ENCODE measurements at regions of chr2 and their contacts with region 1.

Region 1: GRCh38 chr2:130797493-130798435 is 39.0 kb upstream of the ARHGEF4 start:
- DNase-seq: peak; percentile 84 to 96 (median 90)
- ATAC-seq: peak; percentile 88
- H3K4me3 ChIP-seq: peak overlapping the region; percentile 94
- H3K4me3 Mint-ChIP-seq: peak overlapping the region; percentile 85
- H3K27ac ChIP-seq: peak overlapping the region; percentile 74 to 87
- H3K27ac Mint-ChIP-seq: peak overlapping the region; percentile 71
- H3K4me1 ChIP-seq: peaks cover 17% of the 10 kb centered on the region
- H3K4me1 Mint-ChIP-seq: peaks cover 7% of the 10 kb centered on the region
- H3K27me3 ChIP-seq: peaks cover 0 to 2% of the 10 kb centered on the region in 2 experiments
- H3K27me3 Mint-ChIP-seq: peaks cover 4% of the 10 kb centered on the region
- CTCF ChIP-seq: peak; percentile 68

Region 2: DNA sequence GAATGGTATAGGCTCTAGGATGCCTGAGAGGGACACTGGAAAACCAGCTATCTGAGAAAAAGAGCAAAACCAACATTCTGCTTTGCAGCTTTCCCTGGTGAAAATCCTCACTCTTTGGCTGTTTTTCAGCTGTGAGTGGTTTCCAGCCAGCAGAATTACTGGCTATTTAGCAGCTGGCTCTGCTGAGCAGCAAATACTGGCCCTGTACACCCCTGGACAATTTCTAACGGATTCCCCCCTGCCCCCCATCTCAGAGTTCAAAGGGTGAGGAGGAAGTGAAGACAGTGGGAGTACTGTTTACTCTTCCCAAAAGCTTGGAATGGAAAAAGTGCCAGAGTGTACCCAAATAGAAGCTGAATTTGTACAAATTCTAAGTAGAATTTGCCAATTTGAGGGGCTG is 481.2 kb before region 1 on chr2:
- CTCF ChIA-PET with region 1: no interaction called
- POLR2A ChIA-PET with region 1: no interaction called
- intact Hi-C with region 1: no loop called
- DNase-seq: no peak
- ATAC-seq: no peak
- H3K4me3 ChIP-seq: no peak overlapping the region
- H3K4me3 Mint-ChIP-seq: no peak overlapping the region
- H3K27ac ChIP-seq: no peak overlapping the region
- H3K27ac Mint-ChIP-seq: no peak overlapping the region
- H3K4me1 ChIP-seq: no peaks in the 10 kb centered on the region
- H3K4me1 Mint-ChIP-seq: no peaks in the 10 kb centered on the region
- H3K27me3 ChIP-seq: peaks cover 0 to 3% of the 10 kb centered on the region in 2 experiments
- H3K27me3 Mint-ChIP-seq: peaks cover 13% of the 10 kb centered on the region
- CTCF ChIP-seq: no peak

Region 3: DNA sequence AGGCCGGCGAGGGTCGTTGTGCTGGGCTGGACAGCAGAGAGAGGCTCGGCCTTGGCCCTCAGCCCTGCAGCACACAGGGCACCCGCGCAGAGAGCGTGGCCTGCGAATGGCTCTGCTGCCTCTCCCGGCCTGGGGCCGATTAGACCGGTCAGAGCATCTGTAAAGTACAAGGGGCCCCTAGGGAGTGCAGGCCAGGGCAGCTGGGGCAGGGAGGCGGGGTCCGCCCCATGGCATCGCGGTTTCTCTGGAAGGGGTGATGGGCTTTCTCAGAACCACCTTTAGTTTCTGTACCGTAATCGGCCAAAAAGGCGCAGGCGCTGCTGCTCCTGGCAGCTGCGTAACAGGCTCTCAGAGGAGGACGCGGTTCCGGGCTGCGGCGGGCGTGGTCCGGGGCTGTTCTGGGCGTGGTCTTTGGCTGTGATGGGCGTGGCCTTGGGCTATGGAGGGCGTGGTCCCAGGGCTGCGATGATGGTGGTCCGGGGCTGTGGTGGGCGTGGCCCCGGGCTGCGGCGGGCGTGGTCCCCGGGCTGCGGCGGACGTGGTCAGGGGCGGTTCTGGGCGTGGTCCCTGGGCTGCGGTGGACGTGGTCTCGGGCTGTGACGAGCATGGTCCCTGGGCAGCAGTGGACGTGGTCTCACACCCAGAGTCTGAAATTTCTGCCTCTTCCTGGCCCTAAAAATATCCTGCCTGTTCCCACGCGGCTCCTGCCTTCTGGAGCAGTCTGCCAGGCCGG is 70.3 kb before region 1 on chr2:
- CTCF ChIA-PET with region 1: interaction called, 4 read pairs
- POLR2A ChIA-PET with region 1: interaction called, 10 read pairs
- intact Hi-C with region 1: no loop called
- DNase-seq: peak; percentile 77 to 94 (median 87)
- ATAC-seq: peak; percentile 91
- H3K4me3 ChIP-seq: peak overlapping the region; percentile 84
- H3K4me3 Mint-ChIP-seq: peak overlapping the region; percentile 88
- H3K27ac ChIP-seq: peak overlapping the region; percentile 62 to 89
- H3K27ac Mint-ChIP-seq: peak overlapping the region; percentile 90
- H3K4me1 ChIP-seq: peaks cover 34% of the 10 kb centered on the region
- H3K4me1 Mint-ChIP-seq: no peaks in the 10 kb centered on the region
- H3K27me3 ChIP-seq: no peaks in the 10 kb centered on the region
- H3K27me3 Mint-ChIP-seq: peaks cover 5% of the 10 kb centered on the region
- CTCF ChIP-seq: no peak

Region 4: DNA sequence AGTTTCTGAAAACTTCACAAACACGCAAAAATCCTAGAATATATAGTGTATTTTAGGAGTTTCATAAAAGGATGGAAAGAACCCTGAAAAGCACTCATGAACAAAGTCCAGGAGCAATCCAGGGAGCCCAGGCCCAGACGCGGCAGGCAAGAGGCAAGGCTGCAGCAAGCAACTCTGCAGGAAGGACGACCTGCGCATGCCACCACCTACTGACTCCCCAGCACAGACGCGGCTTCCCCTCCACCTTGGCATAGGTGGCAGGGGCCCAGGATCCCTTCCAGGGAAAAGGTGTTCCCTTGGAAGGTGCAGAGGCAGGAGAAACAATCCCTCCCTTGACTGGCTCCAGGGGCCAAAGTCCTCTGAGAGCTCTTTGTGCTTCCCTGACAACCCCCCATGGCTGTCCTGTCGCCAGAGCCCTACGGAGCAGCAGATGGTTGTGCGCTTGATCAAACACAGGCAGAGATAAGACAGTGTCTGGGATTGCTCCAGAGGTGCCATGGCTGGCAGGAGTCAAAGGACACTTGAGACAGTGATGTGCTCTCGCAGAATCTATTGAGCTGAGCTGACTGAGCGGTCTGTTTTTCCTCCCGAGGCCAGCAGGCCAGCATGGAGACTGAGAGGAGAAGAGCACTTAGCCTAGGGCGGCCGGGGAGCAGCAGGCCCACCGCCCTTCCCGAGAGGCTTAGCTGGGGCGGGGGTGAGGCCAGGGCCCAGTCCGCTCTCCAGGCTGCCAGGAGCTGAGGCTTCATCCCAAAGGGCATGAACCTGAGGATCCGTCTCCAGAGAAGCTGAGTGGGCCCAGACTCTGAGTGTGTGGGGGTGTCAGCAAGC is 53.3 kb before region 1 on chr2:
- CTCF ChIA-PET with region 1: no interaction called
- POLR2A ChIA-PET with region 1: no interaction called
- intact Hi-C with region 1: no loop called
- DNase-seq: no peak
- ATAC-seq: no peak
- H3K4me3 ChIP-seq: no peak overlapping the region
- H3K4me3 Mint-ChIP-seq: no peak overlapping the region
- H3K27ac ChIP-seq: no peak overlapping the region
- H3K27ac Mint-ChIP-seq: no peak overlapping the region
- H3K4me1 ChIP-seq: no peaks in the 10 kb centered on the region
- H3K4me1 Mint-ChIP-seq: no peaks in the 10 kb centered on the region
- H3K27me3 ChIP-seq: peaks cover 4 to 9% of the 10 kb centered on the region in 2 experiments
- H3K27me3 Mint-ChIP-seq: peaks cover 58% of the 10 kb centered on the region
- CTCF ChIP-seq: no peak

Region 5: DNA sequence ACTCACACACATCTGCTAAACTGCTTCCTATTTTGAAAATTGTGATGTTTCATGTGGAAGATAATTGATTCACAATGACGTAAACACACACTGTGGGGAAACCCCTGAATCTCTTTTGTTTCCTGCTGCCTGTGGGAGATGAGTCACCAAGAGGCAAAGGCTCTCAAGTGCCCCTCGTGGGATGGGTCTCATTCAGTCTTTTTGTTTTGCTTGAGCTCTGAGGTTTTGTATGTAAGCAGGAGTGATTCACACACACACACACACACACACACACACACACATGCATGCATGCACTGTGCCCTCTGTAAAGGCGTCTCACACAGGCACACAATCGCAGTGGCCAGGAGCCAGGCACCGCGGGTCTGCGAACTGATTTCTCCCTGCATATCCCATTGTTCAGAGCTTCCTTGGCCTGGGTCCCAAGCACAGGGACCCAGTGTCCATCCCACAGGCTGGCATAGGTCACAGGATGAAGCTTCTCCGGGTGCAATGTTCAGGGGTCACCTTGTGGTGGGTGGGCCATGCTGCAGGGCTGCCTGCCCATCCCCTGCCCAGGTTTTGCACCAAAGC is 26.8 kb after region 1 on chr2:
- CTCF ChIA-PET with region 1: interaction called, 10 read pairs
- POLR2A ChIA-PET with region 1: interaction called, 6 read pairs
- intact Hi-C with region 1: loop called in 1 of 2 experiments (anchors 2 kb)
- DNase-seq: peak; percentile 25 to 93 (median 60)
- ATAC-seq: peak; percentile 93
- H3K4me3 ChIP-seq: no peak overlapping the region
- H3K4me3 Mint-ChIP-seq: peak overlapping the region; percentile 56
- H3K27ac ChIP-seq: peak overlapping the region in 1 of 2 donors; percentile 66
- H3K27ac Mint-ChIP-seq: peak overlapping the region; percentile 83
- H3K4me1 ChIP-seq: peaks cover 23% of the 10 kb centered on the region
- H3K4me1 Mint-ChIP-seq: peaks cover 10% of the 10 kb centered on the region
- H3K27me3 ChIP-seq: no peaks in the 10 kb centered on the region
- H3K27me3 Mint-ChIP-seq: no peaks in the 10 kb centered on the region
- CTCF ChIP-seq: no peak

Region 6: DNA sequence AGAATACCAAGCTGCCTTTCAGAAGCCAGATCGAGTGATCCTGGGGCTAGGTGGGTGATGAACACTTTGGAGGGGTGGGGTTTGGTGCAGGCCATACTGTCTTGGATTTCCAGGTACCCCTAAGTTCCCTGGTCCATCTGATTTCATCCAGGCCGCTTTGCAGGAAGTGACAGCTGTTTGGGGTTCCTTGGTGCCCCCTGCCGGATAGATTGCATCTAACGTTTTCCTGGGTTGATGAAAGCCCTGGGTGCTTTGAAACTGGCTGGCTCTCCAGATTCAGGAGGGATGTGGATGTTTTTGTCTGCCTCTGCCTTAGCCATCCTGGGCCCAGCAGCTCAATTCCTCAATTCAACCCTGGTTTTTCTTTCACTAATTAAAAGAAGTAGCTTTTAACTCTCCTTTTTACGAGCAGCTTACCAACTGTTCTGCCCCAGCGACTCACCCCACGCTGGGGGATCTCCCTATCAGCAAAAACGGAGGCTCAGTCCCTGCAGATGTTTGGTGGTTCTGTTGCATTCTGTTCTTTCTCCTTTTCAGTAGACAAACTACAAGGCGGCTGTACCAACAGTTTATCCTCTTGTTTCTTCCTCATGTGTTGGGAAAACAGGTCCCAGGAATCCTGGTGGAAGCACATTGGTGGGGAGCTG is 76.1 kb after region 1 on chr2:
- CTCF ChIA-PET with region 1: interaction called, 62 read pairs
- POLR2A ChIA-PET with region 1: interaction called, 11 read pairs
- intact Hi-C with region 1: loop called (anchors 1 kb)
- DNase-seq: peak; percentile 47 to 78 (median 62)
- ATAC-seq: peak; percentile 67
- H3K4me3 ChIP-seq: no peak overlapping the region
- H3K4me3 Mint-ChIP-seq: no peak overlapping the region
- H3K27ac ChIP-seq: no peak overlapping the region
- H3K27ac Mint-ChIP-seq: no peak overlapping the region
- H3K4me1 ChIP-seq: no peaks in the 10 kb centered on the region
- H3K4me1 Mint-ChIP-seq: no peaks in the 10 kb centered on the region
- H3K27me3 ChIP-seq: peaks cover 0 to 5% of the 10 kb centered on the region in 2 experiments
- H3K27me3 Mint-ChIP-seq: peaks cover 5% of the 10 kb centered on the region
- CTCF ChIP-seq: peak; percentile 61

Region 7: DNA sequence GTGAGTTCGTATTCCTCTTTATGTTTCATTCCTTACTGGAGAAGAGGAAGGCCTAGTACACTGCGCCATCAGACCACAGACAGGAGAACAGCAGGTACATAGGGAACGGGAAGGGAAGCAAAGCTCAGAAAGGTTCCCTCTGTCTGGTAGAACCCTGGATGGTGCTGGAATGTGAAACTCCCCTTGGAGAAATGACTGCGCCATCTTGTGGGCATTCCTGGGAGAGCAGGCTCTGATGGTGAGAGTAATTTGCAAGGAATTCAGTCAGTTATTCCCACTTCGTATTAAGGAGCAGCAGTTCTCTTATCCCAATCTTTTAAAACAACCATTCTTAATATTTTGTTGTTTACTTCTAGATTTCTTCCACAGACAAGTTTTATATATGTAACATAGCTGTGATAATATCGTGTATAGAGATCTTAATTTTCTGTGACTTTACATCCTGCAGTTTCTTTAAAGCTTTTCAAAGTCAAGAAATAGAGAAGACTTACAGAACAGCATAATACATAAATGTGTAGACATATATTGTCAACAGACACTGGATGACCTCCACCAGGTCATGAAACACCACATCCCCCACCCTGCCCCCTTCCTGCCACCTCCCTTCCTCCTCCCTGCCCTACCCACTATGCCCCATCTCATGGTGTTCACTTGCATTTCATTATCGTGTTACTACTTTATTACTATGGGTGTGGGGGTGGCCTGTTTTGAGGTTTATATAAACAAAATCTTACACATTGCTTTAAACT is 122.8 kb after region 1 on chr2:
- CTCF ChIA-PET with region 1: interaction called, 9 read pairs
- POLR2A ChIA-PET with region 1: interaction called, 3 read pairs
- intact Hi-C with region 1: loop called (anchors 1 kb)
- DNase-seq: peak in 13 of 14 experiments; percentile 30 to 65 (median 37)
- ATAC-seq: no peak
- H3K4me3 ChIP-seq: no peak overlapping the region
- H3K4me3 Mint-ChIP-seq: no peak overlapping the region
- H3K27ac ChIP-seq: no peak overlapping the region
- H3K27ac Mint-ChIP-seq: no peak overlapping the region
- H3K4me1 ChIP-seq: no peaks in the 10 kb centered on the region
- H3K4me1 Mint-ChIP-seq: no peaks in the 10 kb centered on the region
- H3K27me3 ChIP-seq: peaks cover 2 to 4% of the 10 kb centered on the region in 2 experiments
- H3K27me3 Mint-ChIP-seq: peaks cover 13% of the 10 kb centered on the region
- CTCF ChIP-seq: peak; percentile 78

Region 8: DNA sequence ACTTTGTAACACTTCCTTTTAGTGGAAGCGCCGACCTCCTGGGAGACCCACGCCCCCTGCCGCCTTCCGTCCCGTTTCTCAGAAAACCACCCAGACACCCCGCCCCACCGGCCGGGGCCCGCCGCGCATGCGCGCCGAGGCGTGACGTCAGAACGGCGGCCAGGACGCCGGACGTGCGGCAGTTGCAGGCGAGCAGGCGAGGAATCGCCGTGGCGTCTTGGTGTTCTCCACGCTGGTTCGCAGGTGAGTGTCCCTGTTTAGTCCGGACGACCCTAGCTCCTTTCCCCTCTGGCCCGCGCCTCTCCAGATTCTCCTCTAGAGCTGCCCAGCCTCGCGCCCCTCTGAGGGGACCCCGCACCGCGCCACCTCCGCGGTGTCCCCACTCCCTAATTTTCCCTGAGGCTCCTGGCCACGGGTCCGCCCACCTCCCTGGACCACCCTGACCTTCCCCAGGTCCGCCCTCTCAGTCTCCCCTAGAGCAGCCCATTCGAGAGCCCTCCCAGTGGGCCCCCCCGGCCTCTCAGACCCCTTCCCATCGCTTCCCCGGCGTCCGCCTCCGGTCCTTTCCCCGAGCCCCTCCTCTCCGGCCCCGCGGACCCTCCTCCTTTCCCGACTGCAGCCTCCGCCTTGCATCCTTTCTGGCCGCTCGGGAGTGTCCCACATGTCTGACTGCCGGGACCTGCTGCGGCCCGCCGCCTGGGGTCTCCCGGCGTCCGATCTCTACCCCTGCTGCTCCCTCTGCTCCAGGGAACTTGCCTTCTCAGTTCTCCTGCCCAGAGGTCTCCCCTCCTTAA is 307.6 kb after region 1 on chr2 and contains the start of gene PLEKHB2:
- CTCF ChIA-PET with region 1: no interaction called
- POLR2A ChIA-PET with region 1: interaction called, 3 read pairs
- intact Hi-C with region 1: loop called in 1 of 2 experiments (anchors 5 kb)
- DNase-seq: peak; percentile 83 to 96 (median 92)
- ATAC-seq: peak; percentile 61
- H3K4me3 ChIP-seq: peak within 1 kb of the TSS; percentile 97
- H3K4me3 Mint-ChIP-seq: peak within 1 kb of the TSS; percentile 98
- H3K27ac ChIP-seq: peak within 1 kb of the TSS; percentile 94 to 96
- H3K27ac Mint-ChIP-seq: peak within 1 kb of the TSS; percentile 98
- H3K4me1 ChIP-seq: peaks cover 43% of the 10 kb centered on the region
- H3K4me1 Mint-ChIP-seq: peaks cover 58% of the 10 kb centered on the region
- H3K27me3 ChIP-seq: no peaks in the 10 kb centered on the region
- H3K27me3 Mint-ChIP-seq: no peaks in the 10 kb centered on the region
- CTCF ChIP-seq: no peak
- total RNA-seq, gene PLEKHB2: 66.9 to 71.7 TPM

Measured in CD4-positive, alpha-beta T cell (primary cell).